GM10248 (cell line): ENCODE measurements at regions of chr2 and their contacts with region 1.

Region 1: GRCh38 chr2:45778720-45779171 is 127.3 kb downstream of the PRKCE start:
- DNase-seq: peak; percentile 67
- CTCF ChIP-seq: peak; percentile 38

Region 2: GRCh38 chr2:45650851-45651414 is 127.8 kb before region 1 on chr2:
- CTCF ChIA-PET with region 1: interaction called, 13 read pairs
- POLR2A ChIA-PET with region 1: no interaction called
- DNase-seq: peak; percentile 91
- CTCF ChIP-seq: peak; percentile 32

Region 3: GRCh38 chr2:45759310-45759851 is 19.4 kb before region 1 on chr2:
- CTCF ChIA-PET with region 1: interaction called, 18 read pairs
- POLR2A ChIA-PET with region 1: no interaction called
- DNase-seq: no peak
- CTCF ChIP-seq: no peak

Region 4: GRCh38 chr2:45794134-45794617 is 15.4 kb after region 1 on chr2:
- CTCF ChIA-PET with region 1: interaction called, 66 read pairs
- POLR2A ChIA-PET with region 1: no interaction called
- DNase-seq: no peak
- CTCF ChIP-seq: no peak